CD8-positive, alpha-beta T cell (primary cell): ENCODE measurements at regions of chr19 and their contacts with region 1.

Region 1: GRCh38 chr19:10112895-10113591 is 1.6 kb downstream of the P2RY11 start:
- DNase-seq: peak in 8 of 9 experiments; percentile 46 to 90 (median 76)
- ATAC-seq: peak; percentile 59
- H3K4me3 ChIP-seq: peak overlapping the region in 1 of 2 experiments; percentile 54
- H3K4me3 Mint-ChIP-seq: peak overlapping the region; percentile 67
- H3K27ac ChIP-seq: peak overlapping the region; percentile 44 to 90
- H3K27ac Mint-ChIP-seq: peak overlapping the region; percentile 89
- H3K4me1 ChIP-seq: peaks cover 39% of the 10 kb centered on the region
- H3K4me1 Mint-ChIP-seq: peaks cover 44% of the 10 kb centered on the region
- H3K27me3 ChIP-seq: no peaks in the 10 kb centered on the region
- H3K27me3 Mint-ChIP-seq: no peaks in the 10 kb centered on the region
- CTCF ChIP-seq: peak; percentile 63

Region 2: DNA sequence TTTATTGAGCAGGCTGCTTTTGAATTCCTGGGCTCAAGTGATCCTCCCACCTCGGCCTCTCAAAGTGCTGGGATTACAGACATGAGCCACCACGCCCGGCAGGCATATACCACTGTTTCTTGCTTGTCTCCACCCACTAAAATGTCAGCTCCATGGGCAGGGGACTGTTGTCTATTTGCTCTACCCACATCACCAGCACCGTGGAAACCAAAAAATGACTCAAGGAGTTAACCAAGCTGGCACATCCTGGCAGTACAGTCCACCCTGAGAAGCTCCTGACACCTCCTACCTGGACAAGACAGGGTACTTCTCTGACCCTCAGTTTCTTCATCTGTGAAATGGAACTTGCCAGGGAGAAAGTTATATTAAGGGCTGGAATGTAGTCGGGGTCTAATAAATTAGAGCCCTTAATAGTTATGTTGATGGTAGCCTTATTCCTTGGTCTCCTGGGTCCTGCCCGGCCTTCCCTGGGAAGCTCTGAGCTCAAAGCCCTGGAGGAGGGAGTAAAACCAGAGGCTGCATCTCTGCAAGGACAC is 85.8 kb before region 1 on chr19:
- CTCF ChIA-PET with region 1: interaction called, 3 read pairs
- POLR2A ChIA-PET with region 1: no interaction called
- intact Hi-C with region 1: loop called in 1 of 2 experiments (anchors 1 kb)
- DNase-seq: no peak
- ATAC-seq: no peak
- H3K4me3 ChIP-seq: no peak overlapping the region
- H3K4me3 Mint-ChIP-seq: no peak overlapping the region
- H3K27ac ChIP-seq: no peak overlapping the region
- H3K27ac Mint-ChIP-seq: no peak overlapping the region
- H3K4me1 ChIP-seq: peaks cover 8% of the 10 kb centered on the region
- H3K4me1 Mint-ChIP-seq: peaks cover 7% of the 10 kb centered on the region
- H3K27me3 ChIP-seq: peaks cover 3 to 5% of the 10 kb centered on the region in 2 experiments
- H3K27me3 Mint-ChIP-seq: peaks cover 18% of the 10 kb centered on the region
- CTCF ChIP-seq: no peak

Region 3: DNA sequence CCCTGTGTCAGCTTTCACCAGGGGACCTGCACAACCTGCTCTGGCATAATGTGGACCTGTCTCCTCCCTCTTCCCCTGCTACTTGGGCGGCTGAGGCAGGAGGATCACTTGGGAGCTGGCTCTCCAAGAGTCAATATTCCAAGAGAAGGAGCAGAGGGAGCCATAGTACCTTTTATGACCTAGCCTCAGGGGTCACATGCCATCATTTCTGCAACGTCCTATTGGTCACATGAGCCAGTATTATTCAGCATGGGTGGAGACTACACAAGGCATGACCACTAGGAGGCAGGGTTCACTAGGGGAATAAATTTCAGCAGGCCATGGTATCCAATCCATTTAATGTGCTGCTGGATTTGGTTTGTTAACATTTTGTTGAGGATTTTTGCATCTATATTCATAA is 38.9 kb before region 1 on chr19:
- CTCF ChIA-PET with region 1: no interaction called
- POLR2A ChIA-PET with region 1: no interaction called
- intact Hi-C with region 1: loop called (anchors 1 kb)
- DNase-seq: peak in 6 of 9 experiments; percentile 34 to 83 (median 51)
- ATAC-seq: peak; percentile 84
- H3K4me3 ChIP-seq: no peak overlapping the region
- H3K4me3 Mint-ChIP-seq: no peak overlapping the region
- H3K27ac ChIP-seq: no peak overlapping the region
- H3K27ac Mint-ChIP-seq: peak overlapping the region; percentile 23
- H3K4me1 ChIP-seq: no peaks in the 10 kb centered on the region
- H3K4me1 Mint-ChIP-seq: no peaks in the 10 kb centered on the region
- H3K27me3 ChIP-seq: no peaks in the 10 kb centered on the region
- H3K27me3 Mint-ChIP-seq: no peaks in the 10 kb centered on the region
- CTCF ChIP-seq: peak; percentile 52